Activated CD4-positive, alpha-beta T cell treated with anti-CD3 and anti-CD28 coated beads for 36 hours (primary cell): ENCODE measurements at regions of chr9 and their contacts with region 1.

Region 1: GRCh38 chr9:15422372-15423230 is at the start of gene SNAPC3:
- DNase-seq: peak; percentile 96
- ATAC-seq: peak; percentile 97
- H3K4me3 Mint-ChIP-seq: peak within 1 kb of the TSS; percentile 95
- H3K27ac Mint-ChIP-seq: peak within 1 kb of the TSS; percentile 92
- H3K4me1 Mint-ChIP-seq: peaks cover 32% of the 10 kb centered on the region
- H3K27me3 Mint-ChIP-seq: no peaks in the 10 kb centered on the region
- total RNA-seq, gene SNAPC3: 37.8 to 39.6 TPM

Region 2: DNA sequence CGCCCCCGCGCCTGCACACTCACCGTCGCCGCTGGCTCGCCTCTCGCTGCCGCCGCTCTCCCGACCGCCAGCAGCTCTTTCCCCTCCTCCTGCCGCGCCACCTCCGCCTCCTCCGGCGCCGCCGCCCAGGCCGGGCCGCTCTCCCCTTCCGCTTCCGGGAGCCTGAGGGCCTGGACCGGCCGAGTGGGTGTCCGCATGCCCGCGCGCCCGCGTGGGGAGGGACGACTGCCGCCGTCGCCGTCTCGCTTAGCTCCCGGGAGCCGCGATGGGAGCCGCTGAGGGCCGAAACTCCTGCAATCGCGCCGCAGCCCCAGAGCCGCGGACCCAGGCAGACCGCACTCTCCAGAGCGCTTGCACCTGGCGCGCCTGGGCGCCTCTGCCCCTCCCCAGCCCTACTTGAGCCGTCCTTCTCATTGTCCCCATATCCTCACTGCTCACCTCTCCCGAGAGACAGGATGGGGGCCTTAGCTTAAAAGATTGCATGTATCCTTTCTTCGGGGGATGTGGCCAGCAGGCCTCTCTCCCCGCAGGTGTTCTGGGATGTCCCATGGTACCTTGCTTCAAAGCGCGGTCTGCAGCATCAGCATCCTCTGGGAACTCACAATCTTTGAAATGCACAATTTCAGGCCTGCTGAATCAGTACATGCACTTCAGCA is 729.3 kb before region 1 on chr9 and contains the start of gene ZDHHC21:
- CTCF ChIA-PET with region 1: no interaction called
- POLR2A ChIA-PET with region 1: no interaction called
- intact Hi-C with region 1: loop called in 1 of 2 experiments (anchors 5 kb)
- DNase-seq: peak; percentile 79
- ATAC-seq: peak; percentile 88
- H3K4me3 Mint-ChIP-seq: peak within 1 kb of the TSS; percentile 91
- H3K27ac Mint-ChIP-seq: peak within 1 kb of the TSS; percentile 94
- H3K4me1 Mint-ChIP-seq: peaks cover 27% of the 10 kb centered on the region
- H3K27me3 Mint-ChIP-seq: peaks cover 4% of the 10 kb centered on the region
- total RNA-seq, gene ZDHHC21: 5.1 TPM

Region 3: GRCh38 chr9:15277400-15278090 is 145.1 kb before region 1 on chr9:
- CTCF ChIA-PET with region 1: interaction called, 4 read pairs
- POLR2A ChIA-PET with region 1: no interaction called
- intact Hi-C with region 1: loop called (anchors 1 to 2 kb)
- DNase-seq: no peak
- ATAC-seq: peak; percentile 76
- H3K4me3 Mint-ChIP-seq: no peak overlapping the region
- H3K27ac Mint-ChIP-seq: peak overlapping the region; percentile 29
- H3K4me1 Mint-ChIP-seq: peaks cover 33% of the 10 kb centered on the region
- H3K27me3 Mint-ChIP-seq: no peaks in the 10 kb centered on the region

Region 4: DNA sequence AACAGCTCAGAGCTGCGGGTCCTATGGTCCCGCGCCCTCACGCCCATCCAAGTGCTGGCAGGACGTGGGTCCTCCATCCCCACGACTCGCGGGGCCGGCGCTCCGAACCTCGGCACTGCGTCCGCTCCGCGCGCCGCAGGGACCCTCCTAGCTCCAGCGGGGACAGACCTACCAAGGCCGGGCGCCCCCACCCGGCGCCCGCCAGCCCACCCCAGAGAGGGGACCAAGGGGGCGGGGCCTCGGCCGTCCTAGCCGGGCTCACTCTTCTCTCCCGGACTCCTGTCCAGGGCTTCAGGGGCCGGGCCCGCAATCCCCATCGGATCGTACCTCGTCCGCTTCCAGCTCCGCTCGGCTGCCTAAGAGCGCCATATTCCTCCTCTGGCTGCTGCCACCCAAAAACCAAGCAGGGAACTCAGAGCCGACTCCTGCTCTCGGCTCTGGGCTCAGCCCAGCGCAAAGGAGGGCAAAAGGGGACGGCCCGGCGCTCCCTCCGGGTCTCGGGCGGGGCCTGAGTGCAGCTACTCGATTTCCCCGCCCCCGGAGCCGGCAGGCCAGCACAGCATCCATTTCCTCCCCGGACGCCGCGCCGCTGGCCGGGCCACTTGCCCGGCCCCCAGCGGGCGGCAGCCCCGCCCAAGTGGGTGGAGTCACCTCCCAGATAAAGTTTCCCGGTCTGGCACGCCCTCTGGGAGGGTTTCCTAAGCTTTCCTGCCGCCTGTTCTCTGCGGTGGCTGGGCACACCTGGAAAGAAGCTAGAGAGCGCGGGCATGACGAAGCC is 115.7 kb before region 1 on chr9 and contains the start of gene TTC39B:
- CTCF ChIA-PET with region 1: no interaction called
- POLR2A ChIA-PET with region 1: no interaction called
- intact Hi-C with region 1: loop called in 1 of 2 experiments (anchors 1 kb)
- DNase-seq: peak; percentile 90
- ATAC-seq: peak; percentile 83
- H3K4me3 Mint-ChIP-seq: peak within 1 kb of the TSS; percentile 98
- H3K27ac Mint-ChIP-seq: peak within 1 kb of the TSS; percentile 98
- H3K4me1 Mint-ChIP-seq: peaks cover 59% of the 10 kb centered on the region
- H3K27me3 Mint-ChIP-seq: no peaks in the 10 kb centered on the region
- total RNA-seq, gene TTC39B: 26.4 to 34.4 TPM

Region 5: GRCh38 chr9:15510789-15511575 is 88.4 kb after region 1 on chr9 and contains the start of gene PSIP1:
- CTCF ChIA-PET with region 1: no interaction called
- POLR2A ChIA-PET with region 1: interaction called, 5 read pairs
- intact Hi-C with region 1: loop called (anchors 1 to 2 kb)
- DNase-seq: peak; percentile 92
- ATAC-seq: peak; percentile 86
- H3K4me3 Mint-ChIP-seq: peak within 1 kb of the TSS; percentile 85
- H3K27ac Mint-ChIP-seq: peak within 1 kb of the TSS; percentile 98
- H3K4me1 Mint-ChIP-seq: peaks cover 48% of the 10 kb centered on the region
- H3K27me3 Mint-ChIP-seq: no peaks in the 10 kb centered on the region
- total RNA-seq, gene PSIP1: 139 to 189 TPM

Region 6: DNA sequence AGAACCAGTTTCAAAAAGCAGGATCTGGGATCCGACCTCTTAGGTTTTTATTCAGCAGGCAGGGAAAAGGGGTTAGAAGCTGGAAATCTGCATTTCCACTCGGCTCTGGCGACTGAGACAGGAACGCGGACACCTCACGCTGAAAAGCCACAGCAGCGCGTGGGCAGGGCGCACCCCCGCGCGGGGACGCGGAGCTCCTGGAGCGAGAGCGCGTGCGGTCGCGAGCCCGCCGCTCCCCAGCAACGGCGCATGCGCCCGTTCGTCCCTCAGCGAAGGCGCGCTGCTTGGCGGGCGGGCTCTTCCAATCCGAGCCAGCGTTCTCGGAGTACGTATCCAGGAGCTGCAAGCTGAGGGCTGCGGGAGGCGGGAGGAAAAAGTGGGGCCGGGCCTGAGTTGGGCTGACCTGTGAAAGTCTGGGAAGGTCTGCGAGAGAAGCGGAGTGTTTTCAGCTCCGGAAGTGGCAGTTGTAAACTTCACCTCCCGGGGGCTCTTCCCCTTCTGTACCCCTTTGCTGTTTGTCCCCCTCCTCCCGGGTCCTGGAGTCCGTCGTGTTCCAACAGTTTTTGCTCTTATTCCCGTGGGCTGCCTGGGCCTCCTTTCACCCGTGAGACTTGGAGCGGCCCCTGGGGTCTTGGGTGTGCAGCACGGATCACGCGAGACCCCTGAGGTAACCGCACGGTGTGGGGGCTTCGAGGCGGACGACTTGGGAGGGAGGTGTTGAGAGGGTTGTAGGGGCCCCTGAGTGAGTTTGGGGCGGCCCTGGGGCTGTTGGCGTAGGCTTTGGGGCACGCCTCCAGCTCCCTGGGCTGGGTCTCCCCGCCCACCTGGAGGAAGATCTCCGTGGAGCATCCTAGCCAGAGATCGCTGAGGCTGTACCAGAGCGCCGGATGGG is 130.3 kb after region 1 on chr9 and contains the start of gene CCDC171:
- CTCF ChIA-PET with region 1: no interaction called
- POLR2A ChIA-PET with region 1: interaction called, 3 read pairs
- intact Hi-C with region 1: loop called (anchors 1 kb)
- DNase-seq: peak; percentile 93
- ATAC-seq: peak; percentile 91
- H3K4me3 Mint-ChIP-seq: peak within 1 kb of the TSS; percentile 79
- H3K27ac Mint-ChIP-seq: peak within 1 kb of the TSS; percentile 80
- H3K4me1 Mint-ChIP-seq: peaks cover 9% of the 10 kb centered on the region
- H3K27me3 Mint-ChIP-seq: no peaks in the 10 kb centered on the region
- total RNA-seq, gene CCDC171: 2.8 to 2.9 TPM